Activated CD4-positive, alpha-beta T cell treated with anti-CD3 and anti-CD28 coated beads, Interleukin-2, amount 10 ng/mL, durations not matched to agents 7 days and 5 days (primary cell): ENCODE measurements at regions of chr1 and their contacts with region 1.

Region 1: GRCh38 chr1:155989242-155990004 is 11.1 kb upstream of the ARHGEF2 start:
- DNase-seq: peak; percentile 84
- H3K4me3 Mint-ChIP-seq: no peak overlapping the region
- H3K27ac Mint-ChIP-seq: peak overlapping the region; percentile 51
- H3K4me1 Mint-ChIP-seq: peaks cover 17% of the 10 kb centered on the region
- H3K27me3 Mint-ChIP-seq: no peaks in the 10 kb centered on the region

Region 2: DNA sequence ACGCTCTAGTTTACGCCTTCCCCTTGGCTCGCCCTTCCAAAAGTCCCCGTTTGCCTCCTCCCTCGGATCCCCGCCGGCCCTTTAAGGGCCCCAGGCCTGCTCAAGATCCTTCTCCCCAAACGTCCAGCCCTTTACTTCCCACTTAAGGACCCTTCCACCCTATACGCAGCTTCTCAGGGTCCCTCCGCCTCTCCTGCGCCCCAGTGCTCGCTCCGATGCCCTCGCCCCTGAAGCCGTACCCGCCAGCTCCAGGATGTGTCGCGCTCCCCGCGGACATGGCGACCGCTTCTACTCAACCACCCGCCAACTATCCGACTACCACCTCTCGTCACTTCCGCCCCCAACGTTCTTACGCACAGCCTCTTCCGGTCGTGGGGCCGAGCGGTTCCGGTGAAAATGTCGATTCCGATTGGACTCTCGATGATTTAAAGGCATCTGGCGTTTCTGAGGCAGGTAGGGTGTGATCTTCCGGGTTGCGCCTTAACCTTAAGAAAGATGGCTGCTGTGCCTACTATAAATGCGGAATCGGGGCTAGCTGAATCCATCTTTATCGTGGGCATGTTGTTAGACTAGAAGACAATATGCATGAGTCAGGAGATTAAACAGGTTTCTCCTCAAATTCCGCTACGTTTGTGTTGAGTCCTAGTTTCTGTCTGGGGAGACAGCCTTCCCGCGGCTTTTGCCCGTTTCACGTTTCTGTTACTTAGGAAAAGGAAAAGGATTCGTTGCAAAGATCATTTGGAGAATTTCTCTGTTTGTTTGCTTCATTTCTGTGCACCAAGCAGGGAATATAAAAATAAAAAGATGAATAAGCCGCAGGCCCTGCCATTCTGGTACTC is 55.1 kb before region 1 on chr1 and contains the start of gene KHDC4:
- CTCF ChIA-PET with region 1: interaction called, 33 read pairs
- POLR2A ChIA-PET with region 1: interaction called, 7 read pairs
- DNase-seq: peak; percentile 98
- H3K4me3 Mint-ChIP-seq: no peak within 1 kb of the TSS
- H3K27ac Mint-ChIP-seq: no peak within 1 kb of the TSS
- H3K4me1 Mint-ChIP-seq: peaks cover 45% of the 10 kb centered on the region
- H3K27me3 Mint-ChIP-seq: no peaks in the 10 kb centered on the region
- total RNA-seq, gene KHDC4: 66.3 to 67.3 TPM

Region 3: DNA sequence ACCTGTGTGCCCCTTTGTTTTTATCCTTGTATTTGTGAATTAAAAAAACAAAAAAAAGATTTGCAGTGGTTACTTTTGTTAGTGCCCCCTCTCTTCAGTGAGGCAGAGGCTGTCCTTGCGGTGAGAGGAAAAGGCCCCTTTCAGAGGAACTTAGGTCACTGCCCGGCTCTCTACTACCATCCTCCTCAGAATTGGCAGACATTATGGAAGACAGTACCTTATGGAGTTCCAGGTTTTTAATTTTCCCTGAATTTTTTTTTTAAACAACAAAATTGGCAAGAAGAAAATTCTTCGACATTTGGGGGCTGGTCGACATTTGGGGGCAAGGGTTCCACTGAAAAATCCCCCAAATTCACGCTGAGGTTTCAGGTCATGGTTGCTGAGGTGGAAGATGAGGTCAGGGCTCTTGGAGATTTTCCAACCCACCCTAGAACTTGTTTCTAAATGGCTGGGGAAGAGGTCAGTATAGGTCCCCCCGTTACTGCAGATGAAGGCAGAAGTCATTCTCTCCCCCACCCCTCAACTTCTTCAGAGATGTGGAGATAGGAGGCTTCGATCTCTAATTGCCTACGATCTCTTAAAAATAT is 42.7 kb before region 1 on chr1:
- CTCF ChIA-PET with region 1: interaction called, 13 read pairs
- POLR2A ChIA-PET with region 1: no interaction called
- DNase-seq: no peak
- H3K4me3 Mint-ChIP-seq: peak overlapping the region; percentile 40
- H3K27ac Mint-ChIP-seq: peak overlapping the region; percentile 83
- H3K4me1 Mint-ChIP-seq: peaks cover 44% of the 10 kb centered on the region
- H3K27me3 Mint-ChIP-seq: no peaks in the 10 kb centered on the region

Region 4: DNA sequence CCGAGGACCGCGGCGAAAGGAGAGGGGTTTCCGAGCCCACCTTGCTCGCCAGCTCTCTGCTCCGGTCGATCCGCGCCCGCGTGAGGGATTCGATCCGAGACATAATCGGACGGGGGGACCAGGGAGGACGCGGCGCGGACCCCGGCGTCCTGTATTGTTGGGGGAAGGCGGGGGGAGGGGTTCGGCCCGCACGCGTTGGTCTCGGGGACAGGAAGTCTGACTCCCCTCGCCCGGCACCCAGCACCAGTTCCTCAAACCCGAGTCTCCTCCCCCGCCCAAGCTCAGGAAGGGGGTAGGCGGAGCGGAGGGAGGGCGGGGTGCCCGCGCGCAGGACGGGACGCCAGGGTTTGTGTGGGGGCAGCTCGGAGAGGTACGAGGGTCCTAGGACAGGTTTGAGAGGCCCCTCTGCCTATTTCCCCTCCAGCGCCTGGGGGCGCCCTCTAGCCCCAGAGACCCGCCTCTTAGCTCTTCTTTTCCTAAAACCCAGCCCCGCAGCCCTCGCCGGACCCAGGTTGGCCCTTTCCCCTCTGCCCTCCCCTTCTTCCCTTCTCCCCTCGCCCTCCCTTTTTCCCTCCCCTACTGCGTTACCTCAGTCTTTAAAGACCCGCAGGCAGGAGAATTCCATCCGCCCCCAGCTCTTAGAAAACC is 11.0 kb before region 1 on chr1 and contains the start of gene ARHGEF2:
- CTCF ChIA-PET with region 1: interaction called, 38 read pairs
- POLR2A ChIA-PET with region 1: no interaction called
- DNase-seq: peak; percentile 84
- H3K4me3 Mint-ChIP-seq: peak within 1 kb of the TSS; percentile 99
- H3K27ac Mint-ChIP-seq: peak within 1 kb of the TSS; percentile 87
- H3K4me1 Mint-ChIP-seq: peaks cover 70% of the 10 kb centered on the region
- H3K27me3 Mint-ChIP-seq: no peaks in the 10 kb centered on the region
- total RNA-seq, gene ARHGEF2: 157 to 191 TPM

Region 5: GRCh38 chr1:156001682-156002171 is 12.3 kb after region 1 on chr1:
- CTCF ChIA-PET with region 1: interaction called, 14 read pairs
- POLR2A ChIA-PET with region 1: no interaction called
- DNase-seq: no peak
- H3K4me3 Mint-ChIP-seq: no peak overlapping the region
- H3K27ac Mint-ChIP-seq: peak overlapping the region; percentile 56
- H3K4me1 Mint-ChIP-seq: peaks cover 27% of the 10 kb centered on the region
- H3K27me3 Mint-ChIP-seq: no peaks in the 10 kb centered on the region